Heart left ventricle (tissue), 16 donors: ENCODE measurements at regions of chr19 and their contacts with region 1.

Region 1: DNA sequence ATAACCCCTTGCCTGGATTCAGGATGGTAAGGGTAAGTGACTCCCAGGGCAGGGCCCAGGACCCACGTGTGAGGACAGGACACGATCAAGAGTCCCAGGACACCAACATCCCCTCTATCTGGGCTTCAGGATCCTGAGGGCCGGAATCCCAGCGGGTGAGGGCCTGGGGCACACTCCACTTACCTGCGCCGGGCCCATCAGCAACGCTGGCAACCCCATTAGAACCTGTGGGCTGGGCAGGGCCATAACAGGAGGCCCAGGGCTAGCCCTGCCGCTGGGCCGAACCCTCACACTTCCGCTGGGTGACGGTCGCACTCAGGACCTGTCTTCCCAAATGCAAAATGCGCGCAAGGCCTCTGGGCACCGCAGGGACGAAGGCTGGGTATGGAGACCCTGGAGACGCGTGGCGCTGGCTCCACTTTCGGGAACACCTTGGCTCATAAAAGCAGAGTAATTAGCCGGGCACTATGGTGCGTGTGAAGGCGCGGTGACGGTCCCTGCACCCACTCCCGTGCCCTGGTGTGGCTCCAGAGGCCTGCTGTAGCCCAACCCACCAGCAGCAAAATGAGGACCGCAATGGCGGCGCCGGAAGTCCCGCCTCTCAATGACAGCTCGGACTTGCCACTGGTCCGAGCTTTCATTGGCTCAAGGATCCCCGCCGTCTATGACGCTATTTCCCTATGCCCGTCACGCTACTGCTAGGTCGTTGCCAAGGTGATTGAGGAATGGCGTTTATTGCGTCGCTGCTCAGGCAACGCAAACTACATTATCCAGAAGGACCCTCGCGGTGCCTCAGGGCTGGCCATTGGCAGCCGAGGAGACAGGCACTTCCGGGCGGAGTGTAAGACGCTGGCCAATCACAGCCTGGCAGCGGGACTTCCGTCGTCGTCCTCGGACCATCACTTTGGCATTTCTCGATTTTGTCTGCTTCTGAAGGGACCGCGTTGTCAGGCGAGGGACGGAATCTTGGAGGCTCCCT is at the start of gene ZNF132:
- DNase-seq: peak; percentile 96 to 99 (median 98)
- ATAC-seq: peak; percentile 98 to 99 (median 98)
- H3K4me3 ChIP-seq: peak within 1 kb of the TSS; percentile 59 to 86 (median 72)
- H3K27ac ChIP-seq: peak within 1 kb of the TSS; percentile 18 to 91 (median 78)
- H3K4me1 ChIP-seq: peaks cover 0 to 21% (median 16%) of the 10 kb centered on the region in 12 donors
- H3K27me3 ChIP-seq: no peaks in the 10 kb centered on the region
- CTCF ChIP-seq: no peak
- POLR2A ChIP-seq: peak in 1 of 2 donors; percentile 54
- total RNA-seq, gene ZNF132: 3.1 to 6.7 (median 5.2) TPM

Region 2: GRCh38 chr19:58380722-58381466 is 59.0 kb before region 1 on chr19 and contains the start of gene ZNF837:
- intact Hi-C with region 1: loop called in 1 of 10 experiments (anchors 2 kb)
- DNase-seq: peak; percentile 99 to 100 (median 99)
- ATAC-seq: peak; percentile 95 to 96 (median 96)
- H3K4me3 ChIP-seq: peak within 1 kb of the TSS; percentile 57 to 94 (median 83)
- H3K27ac ChIP-seq: peak within 1 kb of the TSS; percentile 85 to 98 (median 95)
- H3K4me1 ChIP-seq: peaks cover 2 to 33% (median 25%) of the 10 kb centered on the region in 12 donors
- H3K27me3 ChIP-seq: no peaks in the 10 kb centered on the region
- CTCF ChIP-seq: no peak
- POLR2A ChIP-seq: peak in 1 of 2 donors; percentile 75
- total RNA-seq, gene ZNF837: 0.17 to 0.75 (median 0.63) TPM in 7 of 9 donors, not detected in the others

Region 3: GRCh38 chr19:58408152-58409009 is 31.5 kb before region 1 on chr19 and contains the start of gene ZNF584:
- intact Hi-C with region 1: loop called in 1 of 10 experiments (anchors 2 kb)
- DNase-seq: peak; percentile 96 to 98 (median 97)
- ATAC-seq: peak; percentile 97 to 99 (median 98)
- H3K4me3 ChIP-seq: peak within 1 kb of the TSS; percentile 61 to 99 (median 88)
- H3K27ac ChIP-seq: peak within 1 kb of the TSS; percentile 84 to 97 (median 92)
- H3K4me1 ChIP-seq: peaks cover 0 to 26% (median 22%) of the 10 kb centered on the region in 12 donors
- H3K27me3 ChIP-seq: no peaks in the 10 kb centered on the region
- CTCF ChIP-seq: peak in 5 of 12 donors; percentile 12 to 33 (median 24)
- POLR2A ChIP-seq: peak; percentile 61 to 95
- total RNA-seq, gene ZNF584: 12.7 to 21.6 (median 16.9) TPM

Region 4: DNA sequence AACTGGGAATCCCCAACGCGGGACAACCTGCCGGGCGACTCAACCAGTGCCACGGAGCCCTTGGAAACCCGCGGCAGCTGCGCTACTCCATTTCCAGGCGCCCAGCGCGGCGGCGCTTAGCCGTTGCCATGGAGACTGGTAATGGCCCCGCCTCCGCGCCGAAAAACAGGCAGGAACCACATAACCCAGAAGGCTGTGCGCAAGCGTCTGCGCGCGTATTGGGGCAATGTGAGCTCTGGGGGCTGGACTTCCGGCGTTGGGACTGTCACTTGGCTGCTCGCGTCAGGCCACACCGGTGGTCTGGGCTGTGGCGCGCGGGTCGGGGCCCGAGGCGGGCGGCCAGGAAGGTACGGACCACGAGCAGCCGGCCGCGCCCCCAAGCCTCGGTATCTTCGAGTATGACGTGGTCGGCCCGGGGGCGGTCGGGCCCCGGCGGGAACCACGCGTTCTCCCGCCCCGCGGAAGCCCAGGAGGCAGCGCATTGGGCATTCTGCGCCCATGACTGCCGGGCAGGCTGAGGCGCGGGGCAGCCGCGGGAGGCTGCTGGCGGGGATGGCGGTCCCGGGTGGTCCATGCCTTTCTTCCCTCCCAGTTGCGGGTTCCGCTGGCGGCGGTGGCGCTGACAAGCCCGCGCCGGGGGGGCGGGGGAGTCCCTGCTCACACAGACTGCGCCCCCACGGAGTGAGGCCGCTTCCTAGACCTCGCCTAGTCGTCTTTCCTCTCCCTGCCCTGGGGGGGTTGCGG is 11.7 kb after region 1 on chr19 and contains the start of gene ZNF324B:
- intact Hi-C with region 1: loop called in 2 of 10 experiments (anchors 1 kb)
- DNase-seq: peak; percentile 95 to 98 (median 97)
- ATAC-seq: peak; percentile 94 to 100 (median 98)
- H3K4me3 ChIP-seq: peak within 1 kb of the TSS; percentile 58 to 97 (median 85)
- H3K27ac ChIP-seq: peak within 1 kb of the TSS in 10 of 12 donors; percentile 12 to 78 (median 62)
- H3K4me1 ChIP-seq: peaks cover 0 to 10% (median 6%) of the 10 kb centered on the region in 12 donors
- H3K27me3 ChIP-seq: peaks cover 0 to 11% (median 0%) of the 10 kb centered on the region in 9 donors
- CTCF ChIP-seq: no peak
- POLR2A ChIP-seq: peak in 1 of 2 donors; percentile 80
- total RNA-seq, gene ZNF324B: 2.3 to 5.1 (median 4.5) TPM

Region 5: DNA sequence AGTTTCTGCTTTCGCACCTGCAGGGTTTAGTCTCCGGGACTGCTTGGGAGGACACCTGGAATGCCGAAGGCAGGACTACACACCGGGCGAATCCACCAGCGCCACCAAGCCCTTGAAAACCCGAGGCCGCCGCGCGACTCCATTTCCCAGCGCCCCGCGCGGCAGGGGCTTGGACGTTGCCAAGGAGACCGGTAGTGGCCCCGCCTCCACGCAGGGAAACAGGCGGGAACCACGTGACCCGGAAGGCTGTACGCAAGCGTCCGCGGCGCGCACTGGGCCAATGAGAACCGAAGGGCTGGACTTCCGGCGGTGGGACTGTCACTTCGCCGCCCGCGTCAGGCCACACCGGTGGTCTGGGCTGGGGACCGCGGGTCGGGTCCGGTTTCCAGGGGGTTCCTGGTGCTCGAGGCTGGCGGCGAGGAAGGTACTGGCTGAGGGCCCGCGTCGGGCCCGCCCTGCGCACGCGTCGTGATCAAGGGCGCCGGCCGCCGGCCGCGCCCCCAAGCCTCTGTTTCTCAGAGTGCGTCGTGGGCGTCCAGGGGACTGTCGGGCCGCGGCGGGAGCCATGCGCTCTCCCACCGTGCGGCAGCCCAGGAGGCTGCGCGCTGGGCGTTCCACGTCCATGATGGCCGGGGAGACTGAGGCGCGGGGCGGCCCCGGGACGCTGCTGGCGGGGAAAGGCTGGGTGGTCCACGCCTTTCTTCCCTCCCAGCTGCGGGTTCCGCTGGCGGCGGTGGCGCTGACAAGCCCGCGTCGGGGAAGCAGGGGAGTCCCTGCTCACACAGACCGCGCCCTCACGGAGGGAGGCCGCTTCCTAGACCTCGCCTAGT is 27.1 kb after region 1 on chr19 and contains the start of gene ZNF324:
- intact Hi-C with region 1: loop called in 1 of 10 experiments (anchors 1 kb)
- DNase-seq: peak; percentile 98 to 99 (median 99)
- ATAC-seq: peak; percentile 97 to 99 (median 98)
- H3K4me3 ChIP-seq: peak within 1 kb of the TSS; percentile 63 to 100 (median 94)
- H3K27ac ChIP-seq: peak within 1 kb of the TSS in 11 of 12 donors; percentile 55 to 90 (median 77)
- H3K4me1 ChIP-seq: peaks cover 4 to 16% (median 13%) of the 10 kb centered on the region in 12 donors
- H3K27me3 ChIP-seq: no peaks in the 10 kb centered on the region
- CTCF ChIP-seq: peak in 1 of 12 donors; percentile 17
- POLR2A ChIP-seq: peak in 1 of 2 donors; percentile 78
- total RNA-seq, gene ZNF324: 4.0 to 10.1 (median 5.3) TPM